Activated CD4-positive, alpha-beta memory T cell treated with anti-CD3 and anti-CD28 coated beads for 36 hours (primary cell): ENCODE measurements at regions of chr1 and their contacts with region 1.

Region 1: DNA sequence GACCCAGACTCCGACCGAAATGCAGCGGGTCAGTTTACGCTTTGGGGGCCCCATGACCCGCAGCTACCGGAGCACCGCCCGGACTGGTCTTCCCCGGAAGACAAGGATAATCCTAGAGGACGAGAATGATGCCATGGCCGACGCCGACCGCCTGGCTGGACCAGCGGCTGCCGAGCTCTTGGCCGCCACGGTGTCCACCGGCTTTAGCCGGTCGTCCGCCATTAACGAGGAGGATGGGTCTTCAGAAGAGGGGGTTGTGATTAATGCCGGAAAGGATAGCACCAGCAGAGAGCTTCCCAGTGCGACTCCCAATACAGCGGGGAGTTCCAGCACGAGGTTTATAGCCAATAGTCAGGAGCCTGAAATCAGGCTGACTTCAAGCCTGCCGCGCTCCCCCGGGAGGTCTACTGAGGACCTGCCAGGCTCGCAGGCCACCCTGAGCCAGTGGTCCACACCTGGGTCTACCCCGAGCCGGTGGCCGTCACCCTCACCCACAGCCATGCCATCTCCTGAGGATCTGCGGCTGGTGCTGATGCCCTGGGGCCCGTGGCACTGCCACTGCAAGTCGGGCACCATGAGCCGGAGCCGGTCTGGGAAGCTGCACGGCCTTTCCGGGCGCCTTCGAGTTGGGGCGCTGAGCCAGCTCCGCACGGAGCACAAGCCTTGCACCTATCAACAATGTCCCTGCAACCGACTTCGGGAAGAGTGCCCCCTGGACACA is 534 bp downstream of the C1orf56 start:
- DNase-seq: peak; percentile 74
- H3K4me3 Mint-ChIP-seq: peak overlapping the region; percentile 88
- H3K27ac Mint-ChIP-seq: peak overlapping the region; percentile 82
- H3K4me1 Mint-ChIP-seq: peaks cover 46% of the 10 kb centered on the region
- H3K27me3 Mint-ChIP-seq: no peaks in the 10 kb centered on the region

Region 2: GRCh38 chr1:150464422-150464826 is 583.7 kb before region 1 on chr1:
- CTCF ChIA-PET with region 1: no interaction called
- POLR2A ChIA-PET with region 1: no interaction called
- intact Hi-C with region 1: no loop called
- DNase-seq: peak; percentile 76
- H3K4me3 Mint-ChIP-seq: no peak overlapping the region
- H3K27ac Mint-ChIP-seq: peak overlapping the region; percentile 11
- H3K4me1 Mint-ChIP-seq: peaks cover 4% of the 10 kb centered on the region
- H3K27me3 Mint-ChIP-seq: no peaks in the 10 kb centered on the region

Region 3: DNA sequence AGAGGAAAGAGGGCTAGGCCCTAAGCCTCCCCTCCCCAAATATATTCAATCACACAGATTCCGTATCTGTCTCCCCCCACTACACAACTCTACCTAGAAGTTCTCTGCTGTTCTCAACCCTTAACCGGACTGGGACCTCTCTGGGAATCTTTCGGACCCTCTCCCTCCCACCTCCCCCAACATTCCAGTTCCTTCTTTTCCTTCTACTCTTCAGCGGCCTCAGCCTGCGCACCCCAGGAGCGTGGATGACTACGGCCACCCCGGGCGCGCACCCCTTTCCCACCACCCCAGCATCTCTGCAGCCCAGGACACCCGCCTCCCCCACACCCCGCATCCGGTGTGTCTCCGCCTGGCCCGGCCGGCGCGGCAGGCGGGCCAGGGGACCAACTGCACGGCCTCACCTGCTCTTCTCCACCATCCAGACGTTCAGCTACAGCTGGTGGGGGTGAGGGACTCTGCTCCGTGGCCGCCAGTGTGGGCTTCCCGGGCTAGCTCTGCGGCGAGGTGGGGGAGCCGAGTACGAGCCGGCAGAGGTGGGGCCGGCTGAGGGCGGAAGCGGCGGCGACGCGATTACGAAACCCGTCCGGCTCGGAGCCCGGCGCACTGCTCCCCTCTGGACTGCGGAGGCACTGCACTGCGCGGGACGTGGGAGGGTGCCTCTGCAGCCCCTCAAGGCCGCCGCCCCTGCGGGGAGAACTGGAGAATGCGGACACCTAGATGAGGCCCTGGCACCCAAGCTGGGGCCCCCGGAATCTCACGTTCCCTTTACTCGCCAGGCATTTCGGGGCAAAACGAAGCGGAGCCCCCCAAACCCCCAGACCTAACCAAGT is 11.2 kb after region 1 on chr1 and contains the start of gene CDC42SE1:
- CTCF ChIA-PET with region 1: interaction called, 32 read pairs
- POLR2A ChIA-PET with region 1: interaction called, 28 read pairs
- intact Hi-C with region 1: loop called (anchors 1 kb)
- DNase-seq: peak; percentile 89
- H3K4me3 Mint-ChIP-seq: peak within 1 kb of the TSS; percentile 98
- H3K27ac Mint-ChIP-seq: peak within 1 kb of the TSS; percentile 99
- H3K4me1 Mint-ChIP-seq: peaks cover 56% of the 10 kb centered on the region
- H3K27me3 Mint-ChIP-seq: no peaks in the 10 kb centered on the region
- total RNA-seq, gene CDC42SE1: 135 to 136 TPM